ENCODE measurements at regions of chr4 and their contacts with region 1.

Region 1: GRCh38 chr4:77862478-77863216 is at the start of gene MRPL1:
- DNase-seq: peak; percentile 92
- H3K4me3 Mint-ChIP-seq: peak within 1 kb of the TSS; percentile 86
- H3K27ac Mint-ChIP-seq: peak within 1 kb of the TSS; percentile 99
- H3K4me1 Mint-ChIP-seq: peaks cover 58% of the 10 kb centered on the region
- H3K27me3 Mint-ChIP-seq: peaks cover 4% of the 10 kb centered on the region
- total RNA-seq, gene MRPL1: 46.2 to 51.1 TPM

Region 2: GRCh38 chr4:77629885-77630284 is 232.8 kb before region 1 on chr4:
- CTCF ChIA-PET with region 1: interaction called, 4 read pairs
- POLR2A ChIA-PET with region 1: interaction called, 6 read pairs
- intact Hi-C with region 1: loop called (anchors 5 kb)
- DNase-seq: peak; percentile 33
- H3K4me3 Mint-ChIP-seq: no peak overlapping the region
- H3K27ac Mint-ChIP-seq: peak overlapping the region; percentile 49
- H3K4me1 Mint-ChIP-seq: peaks cover 15% of the 10 kb centered on the region
- H3K27me3 Mint-ChIP-seq: peaks cover 1% of the 10 kb centered on the region

Region 3: GRCh38 chr4:77734928-77735327 is 127.7 kb before region 1 on chr4:
- CTCF ChIA-PET with region 1: no interaction called
- POLR2A ChIA-PET with region 1: interaction called, 3 read pairs
- intact Hi-C with region 1: loop called (anchors 5 kb)
- DNase-seq: peak; percentile 45
- H3K4me3 Mint-ChIP-seq: peak overlapping the region; percentile 45
- H3K27ac Mint-ChIP-seq: peak overlapping the region; percentile 66
- H3K4me1 Mint-ChIP-seq: peaks cover 44% of the 10 kb centered on the region
- H3K27me3 Mint-ChIP-seq: no peaks in the 10 kb centered on the region

Region 4: DNA sequence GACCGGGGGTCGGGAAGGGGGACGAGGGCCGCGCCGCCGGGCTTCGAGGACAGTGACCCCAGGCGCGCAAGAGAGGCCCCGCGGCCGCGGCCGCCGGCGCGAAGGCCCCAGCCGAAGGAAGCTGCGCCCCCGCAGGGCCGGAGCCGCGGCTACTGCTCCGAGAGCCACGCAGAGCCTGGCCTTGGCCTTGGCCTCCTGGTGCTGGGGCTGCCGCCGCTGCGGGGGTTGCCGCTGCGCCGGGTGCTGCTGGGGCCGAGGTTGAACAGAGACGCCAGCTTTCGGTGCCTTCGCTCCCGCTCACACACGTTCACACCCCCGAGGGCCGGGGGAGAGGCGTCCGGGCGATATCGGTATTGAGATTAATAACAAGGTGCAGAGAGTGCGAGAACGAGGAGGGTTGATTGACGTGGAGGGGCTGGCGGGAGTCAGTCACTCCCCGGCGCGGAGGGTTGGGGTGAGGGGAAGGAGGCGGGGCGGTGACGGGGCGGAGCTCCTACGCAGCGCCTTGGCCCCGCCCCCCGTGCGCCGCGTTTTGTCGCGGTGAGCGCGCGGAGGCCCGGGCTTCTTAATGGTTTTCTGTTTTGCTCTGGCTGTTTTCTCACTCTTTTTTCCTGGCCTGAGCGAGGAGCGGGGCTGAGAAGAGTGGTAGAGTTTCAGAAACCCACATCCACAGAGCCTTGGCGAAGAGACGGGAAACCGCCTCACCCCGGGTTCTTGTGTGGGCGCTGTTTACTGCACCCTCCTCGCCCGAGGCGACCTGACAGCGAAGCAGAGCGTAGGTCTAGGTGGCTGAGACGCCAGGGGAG is 42.6 kb before region 1 on chr4:
- CTCF ChIA-PET with region 1: interaction called, 54 read pairs
- POLR2A ChIA-PET with region 1: interaction called, 229 read pairs
- intact Hi-C with region 1: loop called (anchors 1 kb)
- DNase-seq: peak; percentile 97
- H3K4me3 Mint-ChIP-seq: peak overlapping the region; percentile 97
- H3K27ac Mint-ChIP-seq: peak overlapping the region; percentile 94
- H3K4me1 Mint-ChIP-seq: peaks cover 47% of the 10 kb centered on the region
- H3K27me3 Mint-ChIP-seq: peaks cover 2% of the 10 kb centered on the region

Region 5: GRCh38 chr4:78775303-78776030 is 912.8 kb after region 1 on chr4:
- CTCF ChIA-PET with region 1: no interaction called
- POLR2A ChIA-PET with region 1: no interaction called
- intact Hi-C with region 1: loop called (anchors 1 kb)
- DNase-seq: peak; percentile 90
- H3K4me3 Mint-ChIP-seq: peak overlapping the region; percentile 93
- H3K27ac Mint-ChIP-seq: peak overlapping the region; percentile 91
- H3K4me1 Mint-ChIP-seq: peaks cover 22% of the 10 kb centered on the region
- H3K27me3 Mint-ChIP-seq: no peaks in the 10 kb centered on the region